Heart left ventricle (tissue), 16 donors: ENCODE measurements at regions of chr2 and their contacts with region 1.

Region 1: GRCh38 chr2:199583676-199584075 is 125.9 kb upstream of the SATB2 start:
- DNase-seq: no peak
- ATAC-seq: no peak
- H3K4me3 ChIP-seq: no peak overlapping the region
- H3K27ac ChIP-seq: no peak overlapping the region
- H3K4me1 ChIP-seq: peaks cover 0 to 8% (median 0%) of the 10 kb centered on the region in 12 donors
- H3K27me3 ChIP-seq: peaks cover 0 to 23% (median 0%) of the 10 kb centered on the region in 9 donors
- CTCF ChIP-seq: no peak
- POLR2A ChIP-seq: no peak

Region 2: GRCh38 chr2:199315299-199316179 is 268.1 kb before region 1 on chr2:
- intact Hi-C with region 1: no loop called
- DNase-seq: no peak
- ATAC-seq: no peak
- H3K4me3 ChIP-seq: no peak overlapping the region
- H3K27ac ChIP-seq: no peak overlapping the region
- H3K4me1 ChIP-seq: no peaks in the 10 kb centered on the region
- H3K27me3 ChIP-seq: no peaks in the 10 kb centered on the region
- CTCF ChIP-seq: no peak
- POLR2A ChIP-seq: no peak

Region 3: GRCh38 chr2:199572571-199572970 is 11.1 kb before region 1 on chr2:
- intact Hi-C with region 1: no loop called
- DNase-seq: no peak
- ATAC-seq: no peak
- H3K4me3 ChIP-seq: no peak overlapping the region
- H3K27ac ChIP-seq: no peak overlapping the region
- H3K4me1 ChIP-seq: no peaks in the 10 kb centered on the region
- H3K27me3 ChIP-seq: peaks cover 0 to 4% (median 0%) of the 10 kb centered on the region in 9 donors
- CTCF ChIP-seq: no peak
- POLR2A ChIP-seq: no peak

Region 4: DNA sequence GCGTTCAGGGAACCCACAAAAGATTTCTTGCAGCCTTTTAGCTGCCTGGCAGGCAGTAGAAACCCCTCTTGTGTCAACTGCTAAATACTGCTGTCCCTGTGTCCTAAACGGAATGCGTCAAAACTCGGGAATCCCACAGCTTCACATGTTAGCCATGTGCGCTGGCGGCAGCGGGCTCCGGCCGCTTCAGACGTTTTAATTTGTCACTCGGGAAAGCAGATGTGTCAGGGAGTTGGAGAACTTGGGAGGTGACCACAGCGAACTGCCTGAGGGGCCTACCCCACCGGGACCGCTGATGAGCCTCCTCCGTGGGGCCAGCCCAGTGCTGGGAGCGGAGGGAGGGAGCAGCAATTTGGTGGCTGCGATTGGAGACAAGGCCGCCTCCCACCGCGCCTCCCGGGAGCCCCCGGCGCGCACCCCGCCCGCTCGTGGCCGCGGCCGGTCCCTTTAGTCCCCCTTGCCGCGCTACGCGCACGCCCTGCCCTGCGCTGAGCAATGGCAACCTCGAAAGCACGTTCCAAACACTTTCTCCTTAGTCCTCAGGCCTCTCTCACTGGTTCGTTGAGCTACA is 20.1 kb after region 1 on chr2:
- intact Hi-C with region 1: loop called in 1 of 10 experiments (anchors 2 kb)
- DNase-seq: no peak
- ATAC-seq: no peak
- H3K4me3 ChIP-seq: peak overlapping the region in 3 of 12 donors; percentile 6 to 24 (median 24)
- H3K27ac ChIP-seq: no peak overlapping the region
- H3K4me1 ChIP-seq: peaks cover 0 to 5% (median 0%) of the 10 kb centered on the region in 12 donors
- H3K27me3 ChIP-seq: peaks cover 0 to 34% (median 6%) of the 10 kb centered on the region in 9 donors
- CTCF ChIP-seq: no peak
- POLR2A ChIP-seq: no peak

Region 5: GRCh38 chr2:200212862-200213425 is 629.3 kb after region 1 on chr2:
- intact Hi-C with region 1: no loop called
- DNase-seq: no peak
- ATAC-seq: no peak
- H3K4me3 ChIP-seq: no peak overlapping the region
- H3K27ac ChIP-seq: no peak overlapping the region
- H3K4me1 ChIP-seq: no peaks in the 10 kb centered on the region
- H3K27me3 ChIP-seq: peaks cover 0 to 4% (median 0%) of the 10 kb centered on the region in 9 donors
- CTCF ChIP-seq: no peak
- POLR2A ChIP-seq: no peak